H1 (cell line): ENCODE measurements at regions of chr5 and their contacts with region 1.

Region 1: GRCh38 chr5:132358775-132359174 is 10.7 kb upstream of the SLC22A5 start:
- DNase-seq: no peak
- H3K4me3 ChIP-seq: no peak overlapping the region
- H3K27ac ChIP-seq: no peak overlapping the region
- H3K4me1 ChIP-seq: peaks cover 3 to 6% (median 5%) of the 10 kb centered on the region in 4 experiments; a peak in 5 of 7 replicates
- H3K27me3 ChIP-seq: no peaks in the 10 kb centered on the region
- CTCF ChIP-seq: no peak
- EP300 ChIP-seq: no peak
- POLR2A ChIP-seq: no peak
- RAD21 ChIP-seq: no peak

Region 2: DNA sequence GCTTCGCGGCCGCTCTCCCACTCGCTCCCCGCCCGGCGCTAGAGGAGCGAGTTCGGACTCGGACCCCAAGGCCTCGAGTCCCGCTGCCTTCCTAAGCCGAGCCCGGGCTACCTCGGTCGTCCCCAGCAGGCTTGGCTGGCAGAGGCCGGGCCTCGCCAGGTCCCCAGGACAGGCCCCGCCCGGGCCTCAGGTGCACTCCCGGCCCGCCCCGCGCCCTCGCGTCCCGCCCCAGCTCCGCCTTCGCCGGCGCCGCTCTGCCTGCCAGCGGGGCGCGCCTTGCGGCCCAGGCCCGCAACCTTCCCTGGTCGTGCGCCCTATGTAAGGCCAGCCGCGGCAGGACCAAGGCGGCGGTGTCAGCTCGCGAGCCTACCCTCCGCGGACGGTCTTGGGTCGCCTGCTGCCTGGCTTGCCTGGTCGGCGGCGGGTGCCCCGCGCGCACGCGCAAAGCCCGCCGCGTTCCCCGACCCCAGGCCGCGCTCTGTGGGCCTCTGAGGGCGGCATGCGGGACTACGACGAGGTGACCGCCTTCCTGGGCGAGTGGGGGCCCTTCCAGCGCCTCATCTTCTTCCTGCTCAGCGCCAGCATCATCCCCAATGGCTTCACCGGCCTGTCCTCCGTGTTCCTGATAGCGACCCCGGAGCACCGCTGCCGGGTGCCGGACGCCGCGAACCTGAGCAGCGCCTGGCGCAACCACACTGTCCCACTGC is 10.9 kb after region 1 on chr5 and contains the start of gene SLC22A5:
- CTCF ChIA-PET with region 1: interaction called, 11 read pairs
- POLR2A ChIA-PET with region 1: interaction called, 4 read pairs
- DNase-seq: peak; percentile 41 to 86
- H3K4me3 ChIP-seq: peak within 1 kb of the TSS; percentile 47 to 72 (median 60)
- H3K27ac ChIP-seq: no peak within 1 kb of the TSS
- H3K4me1 ChIP-seq: peaks cover 0 to 4% (median 2%) of the 10 kb centered on the region in 4 experiments; a peak in 2 of 7 replicates
- H3K27me3 ChIP-seq: peaks cover 0 to 18% (median 8%) of the 10 kb centered on the region in 4 experiments; a peak in 5 of 7 replicates
- CTCF ChIP-seq: no peak
- EP300 ChIP-seq: no peak
- POLR2A ChIP-seq: peak in 1 of 2 experiments; percentile 30; a peak in 2 of 3 replicates
- RAD21 ChIP-seq: no peak
- total RNA-seq, gene SLC22A5: 2.7 and 4.0 TPM in 2 replicates